ENCODE measurements at regions of chr3 and their contacts with region 1.

Region 1: GRCh38 chr3:126475413-126476114 is at the start of gene ZXDC:
- DNase-seq: peak; percentile 77 to 97
- H3K4me3 ChIP-seq: peak within 1 kb of the TSS; percentile 96
- H3K27ac ChIP-seq: peak within 1 kb of the TSS; percentile 75
- H3K4me1 ChIP-seq: peaks cover 26% of the 10 kb centered on the region
- H3K27me3 ChIP-seq: no peaks in the 10 kb centered on the region
- CTCF ChIP-seq: no peak
- total RNA-seq, gene ZXDC: 52.9 and 55.4 TPM in 2 replicates

Region 2: GRCh38 chr3:125212509-125213244 is 1262.9 kb before region 1 on chr3 and contains the start of gene SLC12A8:
- CTCF ChIA-PET with region 1: no interaction called
- POLR2A ChIA-PET with region 1: interaction called, 34 read pairs
- intact Hi-C with region 1: no loop called
- DNase-seq: peak in 1 of 2 experiments; percentile 43
- H3K4me3 ChIP-seq: peak within 1 kb of the TSS; percentile 68
- H3K27ac ChIP-seq: no peak within 1 kb of the TSS
- H3K4me1 ChIP-seq: 0 out of 2 replicates have a peak, but pooled peaks cover 17% of the 10 kb centered on the region
- H3K27me3 ChIP-seq: no peaks in the 10 kb centered on the region
- CTCF ChIP-seq: no peak
- total RNA-seq, gene SLC12A8: 30.7 and 42.9 TPM in 2 replicates

Region 3: GRCh38 chr3:126180477-126181397 is 294.8 kb before region 1 on chr3 and contains the start of gene ALDH1L1:
- CTCF ChIA-PET with region 1: no interaction called
- POLR2A ChIA-PET with region 1: interaction called, 17 read pairs
- intact Hi-C with region 1: no loop called
- DNase-seq: peak; percentile 72 to 90
- H3K4me3 ChIP-seq: peak within 1 kb of the TSS; percentile 65
- H3K27ac ChIP-seq: peak within 1 kb of the TSS; percentile 69
- H3K4me1 ChIP-seq: peaks cover 14% of the 10 kb centered on the region; the same call in 1 of the 2 replicates
- H3K27me3 ChIP-seq: no peaks in the 10 kb centered on the region
- CTCF ChIP-seq: no peak
- total RNA-seq, gene ALDH1L1: 46.9 and 50.0 TPM in 2 replicates

Region 4: GRCh38 chr3:126287536-126288241 is 187.9 kb before region 1 on chr3:
- CTCF ChIA-PET with region 1: no interaction called
- POLR2A ChIA-PET with region 1: no interaction called
- intact Hi-C with region 1: loop called (anchors 10 kb)
- DNase-seq: peak in 1 of 2 experiments; percentile 55
- H3K4me3 ChIP-seq: no peak overlapping the region
- H3K27ac ChIP-seq: no peak overlapping the region
- H3K4me1 ChIP-seq: peaks cover 5% of the 10 kb centered on the region; the same call in 1 of the 2 replicates
- H3K27me3 ChIP-seq: no peaks in the 10 kb centered on the region
- CTCF ChIP-seq: no peak

Region 5: GRCh38 chr3:126522363-126522788 is 46.8 kb after region 1 on chr3:
- CTCF ChIA-PET with region 1: no interaction called
- POLR2A ChIA-PET with region 1: no interaction called
- intact Hi-C with region 1: loop called (anchors 5 kb)
- DNase-seq: peak in 1 of 2 experiments; percentile 55
- H3K4me3 ChIP-seq: no peak overlapping the region
- H3K27ac ChIP-seq: no peak overlapping the region
- H3K4me1 ChIP-seq: no peaks in the 10 kb centered on the region
- H3K27me3 ChIP-seq: peaks cover 28% of the 10 kb centered on the region; the same call in 1 of the 2 replicates
- CTCF ChIP-seq: peak; percentile 93

Region 6: GRCh38 chr3:127455541-127456450 is 980.2 kb after region 1 on chr3:
- CTCF ChIA-PET with region 1: no interaction called
- POLR2A ChIA-PET with region 1: no interaction called
- intact Hi-C with region 1: loop called (anchors 5 kb)
- DNase-seq: peak in 1 of 2 experiments; percentile 90
- H3K4me3 ChIP-seq: peak overlapping the region; percentile 39; the same call in 1 of the 2 replicates
- H3K27ac ChIP-seq: no peak overlapping the region
- H3K4me1 ChIP-seq: peaks cover 11% of the 10 kb centered on the region
- H3K27me3 ChIP-seq: peaks cover 60% of the 10 kb centered on the region
- CTCF ChIP-seq: peak; percentile 82

Region 7: GRCh38 chr3:127532561-127533203 is 1057.1 kb after region 1 on chr3:
- CTCF ChIA-PET with region 1: interaction called, 11 read pairs
- POLR2A ChIA-PET with region 1: no interaction called
- intact Hi-C with region 1: no loop called
- DNase-seq: no peak
- H3K4me3 ChIP-seq: no peak overlapping the region
- H3K27ac ChIP-seq: no peak overlapping the region
- H3K4me1 ChIP-seq: no peaks in the 10 kb centered on the region
- H3K27me3 ChIP-seq: peaks cover 35% of the 10 kb centered on the region
- CTCF ChIP-seq: no peak